ENCODE measurements at regions of chr10 and their contacts with region 1.

Region 1: DNA sequence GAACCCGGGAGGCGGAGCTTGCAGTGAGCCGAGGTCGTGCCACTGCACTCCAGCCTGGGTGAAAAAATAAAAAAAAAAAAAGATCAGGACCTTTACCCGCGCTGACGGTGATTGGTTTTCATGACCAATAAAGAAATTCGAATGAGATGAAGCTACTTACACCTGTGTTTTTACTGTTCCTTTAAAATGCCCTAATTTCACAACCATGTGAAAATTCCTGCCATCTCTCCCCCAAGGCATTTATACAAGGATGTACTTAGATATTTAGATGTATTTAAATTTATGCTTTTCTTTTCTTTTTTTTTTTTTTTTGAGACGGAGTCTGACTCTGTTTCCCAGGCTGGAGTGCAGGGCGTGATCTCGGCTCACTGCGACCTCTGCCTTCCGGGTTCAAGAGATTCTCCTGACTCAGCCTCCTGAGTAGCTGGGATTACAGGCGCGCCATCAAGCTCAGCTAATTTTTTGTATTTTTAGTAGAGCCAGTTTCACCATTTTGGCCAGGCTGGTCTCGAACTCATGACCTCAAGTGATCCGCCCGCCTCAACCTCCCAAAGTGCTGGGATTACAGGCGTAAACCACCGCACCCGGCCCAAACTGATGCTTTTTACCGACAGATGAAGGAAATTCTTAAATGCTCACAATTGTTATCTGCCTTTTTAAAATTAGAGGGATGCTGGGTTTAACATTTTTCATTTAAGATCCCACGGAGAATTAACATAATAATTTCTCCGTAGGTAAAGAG is 3.1 kb upstream of the PHYH start:
- DNase-seq: no peak
- H3K4me3 ChIP-seq: peak overlapping the region; percentile 81
- H3K4me3 Mint-ChIP-seq: peak overlapping the region; percentile 78 to 96 (median 92)
- H3K27ac ChIP-seq: peak overlapping the region; percentile 100
- H3K27ac Mint-ChIP-seq: peak overlapping the region in 6 of 8 donors; percentile 96 to 100 (median 99)
- H3K4me1 ChIP-seq: peaks cover 22% of the 10 kb centered on the region
- H3K4me1 Mint-ChIP-seq: peaks cover 17 to 31% (median 24%) of the 10 kb centered on the region in 3 donors
- H3K27me3 ChIP-seq: no peaks in the 10 kb centered on the region
- H3K27me3 Mint-ChIP-seq: no peaks in the 10 kb centered on the region

Region 2: GRCh38 chr10:13160934-13161856 is 141.8 kb before region 1 on chr10 and contains the start of gene MCM10:
- CTCF ChIA-PET with region 1: interaction called, 34 read pairs
- POLR2A ChIA-PET with region 1: interaction called, 19 read pairs
- DNase-seq: peak; percentile 95 to 98 (median 97)
- H3K4me3 ChIP-seq: peak within 1 kb of the TSS; percentile 55
- H3K4me3 Mint-ChIP-seq: peak within 1 kb of the TSS; percentile 78 to 92 (median 88)
- H3K27ac ChIP-seq: peak within 1 kb of the TSS; percentile 33
- H3K27ac Mint-ChIP-seq: peak within 1 kb of the TSS; percentile 15 to 93 (median 80)
- H3K4me1 ChIP-seq: peaks cover 13% of the 10 kb centered on the region
- H3K4me1 Mint-ChIP-seq: peaks cover 14 to 24% (median 20%) of the 10 kb centered on the region in 3 donors
- H3K27me3 ChIP-seq: no peaks in the 10 kb centered on the region
- H3K27me3 Mint-ChIP-seq: peaks cover 1 to 6% of the 10 kb centered on the region in 2 donors
- total RNA-seq, gene MCM10: 71.3 to 73.1 TPM

Region 3: DNA sequence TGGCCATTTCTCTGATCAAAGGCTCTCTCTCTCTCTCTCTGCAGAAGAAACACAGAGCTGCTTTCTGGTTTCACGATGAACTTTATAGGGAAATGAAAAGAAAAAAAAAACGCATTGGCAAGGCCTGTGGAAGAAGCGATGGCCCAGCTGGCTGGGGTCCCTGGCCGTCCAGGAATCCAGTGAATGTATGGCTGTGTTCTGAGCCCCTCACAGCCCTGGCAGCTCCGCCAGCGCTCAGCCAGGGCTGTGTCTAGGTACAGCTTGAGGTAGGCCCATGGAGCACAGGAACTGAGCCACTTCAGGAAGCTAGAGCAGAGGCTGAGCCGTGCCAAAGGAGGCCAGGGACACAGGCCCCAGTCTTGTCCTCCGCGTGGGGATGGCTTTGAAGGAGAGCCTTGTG is 55.7 kb before region 1 on chr10:
- CTCF ChIA-PET with region 1: no interaction called
- POLR2A ChIA-PET with region 1: no interaction called
- DNase-seq: no peak
- H3K4me3 ChIP-seq: no peak overlapping the region
- H3K4me3 Mint-ChIP-seq: no peak overlapping the region
- H3K27ac ChIP-seq: no peak overlapping the region
- H3K27ac Mint-ChIP-seq: no peak overlapping the region
- H3K4me1 ChIP-seq: no peaks in the 10 kb centered on the region
- H3K4me1 Mint-ChIP-seq: no peaks in the 10 kb centered on the region
- H3K27me3 ChIP-seq: no peaks in the 10 kb centered on the region
- H3K27me3 Mint-ChIP-seq: peaks cover 3% of the 10 kb centered on the region in 2 donors

Region 4: DNA sequence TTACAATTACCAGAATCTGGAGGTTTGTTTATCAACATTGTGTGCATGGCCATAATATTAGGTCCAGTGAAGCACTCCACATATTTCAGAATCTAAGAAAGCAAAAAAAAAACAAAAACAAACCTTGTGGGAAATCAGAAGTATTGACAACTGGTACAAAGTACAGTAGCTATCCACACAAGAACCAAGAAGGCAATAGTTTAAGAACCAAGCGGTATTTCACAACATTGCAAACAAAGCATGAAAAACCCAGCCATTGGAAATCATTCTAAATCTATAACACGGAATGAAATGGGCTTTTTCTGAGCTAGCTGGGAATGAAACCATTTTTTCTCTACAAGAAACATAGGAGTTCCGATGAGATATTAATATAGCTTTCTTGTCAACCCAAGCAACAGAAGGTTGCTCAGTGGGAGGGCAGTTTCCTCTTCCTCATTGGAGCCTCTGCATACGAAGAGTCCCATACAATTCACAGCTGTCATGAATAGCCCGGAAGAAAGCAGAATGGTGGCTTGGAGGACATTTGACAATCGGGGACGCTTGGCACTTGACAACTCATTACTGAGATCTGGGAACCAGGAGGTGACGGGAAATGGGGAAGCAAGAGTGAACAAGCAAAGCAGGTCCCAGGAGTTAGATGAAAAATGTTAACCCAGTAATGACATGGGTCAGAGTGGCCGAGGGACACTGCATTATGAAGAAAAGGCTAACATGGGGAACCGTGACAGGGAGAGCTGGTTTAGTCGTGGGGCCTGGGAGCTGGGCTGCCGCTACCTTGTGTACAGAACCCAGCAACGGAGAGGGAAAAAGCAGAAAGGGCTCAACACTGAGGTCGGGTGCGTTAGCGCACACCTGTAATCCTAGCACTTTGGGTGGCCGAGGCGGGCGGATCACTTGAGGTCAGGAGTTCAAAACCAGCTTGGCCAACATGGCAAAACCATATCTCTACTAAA is 10.9 kb before region 1 on chr10:
- CTCF ChIA-PET with region 1: interaction called, 11 read pairs
- POLR2A ChIA-PET with region 1: interaction called, 3 read pairs
- DNase-seq: no peak
- H3K4me3 ChIP-seq: no peak overlapping the region
- H3K4me3 Mint-ChIP-seq: no peak overlapping the region
- H3K27ac ChIP-seq: no peak overlapping the region
- H3K27ac Mint-ChIP-seq: no peak overlapping the region
- H3K4me1 ChIP-seq: no peaks in the 10 kb centered on the region
- H3K4me1 Mint-ChIP-seq: peaks cover 0 to 8% (median 5%) of the 10 kb centered on the region in 3 donors
- H3K27me3 ChIP-seq: no peaks in the 10 kb centered on the region
- H3K27me3 Mint-ChIP-seq: no peaks in the 10 kb centered on the region

Region 5: DNA sequence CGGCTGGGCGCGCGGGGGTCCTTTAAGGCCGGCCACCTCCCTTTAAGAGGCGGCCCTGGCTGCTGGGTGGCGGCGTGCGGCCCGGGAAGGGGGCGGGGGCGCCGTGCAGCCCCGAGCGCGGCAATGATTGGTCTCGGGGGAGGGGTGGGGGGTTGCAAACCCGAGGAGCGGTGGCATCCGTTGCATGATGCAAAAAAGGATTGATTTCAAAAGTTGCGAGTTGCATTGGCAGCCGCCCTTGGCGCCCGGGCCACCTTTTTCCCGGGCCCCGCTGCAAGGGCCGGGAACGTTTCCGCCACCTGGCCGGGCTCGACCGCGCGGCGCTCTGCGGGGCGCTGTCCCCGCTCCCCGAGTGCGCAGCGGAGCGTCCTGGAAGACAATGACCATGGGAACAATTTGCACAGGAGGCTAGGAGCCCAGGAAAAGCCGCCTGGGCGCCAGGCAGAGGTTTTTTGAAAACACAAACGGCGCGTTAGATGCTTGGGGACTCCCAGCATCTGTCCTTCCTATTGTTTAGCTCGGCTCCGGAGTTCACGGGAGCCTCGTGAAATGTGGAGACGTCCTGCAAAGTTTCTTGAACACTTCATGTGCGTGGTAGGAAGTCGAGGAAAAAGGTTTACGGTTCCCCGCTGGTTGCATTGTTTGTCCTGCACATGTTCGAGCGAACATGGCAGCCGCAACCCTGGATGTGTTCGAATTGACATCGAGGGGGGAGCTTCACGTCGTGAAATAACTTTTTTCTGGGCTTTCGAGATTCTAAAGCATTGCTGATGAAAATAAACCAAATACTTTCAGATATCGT is 45.4 kb after region 1 on chr10 and contains the start of gene SEPHS1:
- CTCF ChIA-PET with region 1: interaction called, 6 read pairs
- POLR2A ChIA-PET with region 1: interaction called, 29 read pairs
- DNase-seq: peak; percentile 66 to 84 (median 75)
- H3K4me3 ChIP-seq: peak within 1 kb of the TSS; percentile 85
- H3K4me3 Mint-ChIP-seq: peak within 1 kb of the TSS; percentile 93 to 97 (median 94)
- H3K27ac ChIP-seq: peak within 1 kb of the TSS; percentile 68
- H3K27ac Mint-ChIP-seq: peak within 1 kb of the TSS; percentile 91 to 97 (median 93)
- H3K4me1 ChIP-seq: peaks cover 40% of the 10 kb centered on the region
- H3K4me1 Mint-ChIP-seq: peaks cover 48 to 70% (median 69%) of the 10 kb centered on the region in 3 donors
- H3K27me3 ChIP-seq: no peaks in the 10 kb centered on the region
- H3K27me3 Mint-ChIP-seq: peaks cover 0 to 6% of the 10 kb centered on the region in 2 donors
- total RNA-seq, gene SEPHS1: 52.0 to 59.4 TPM

Measured in CD8-positive, alpha-beta memory T cell (primary cell).